Posterior vena cava (tissue), 2 donors: ENCODE measurements at regions of chr9 and their contacts with region 1.

Region 1: DNA sequence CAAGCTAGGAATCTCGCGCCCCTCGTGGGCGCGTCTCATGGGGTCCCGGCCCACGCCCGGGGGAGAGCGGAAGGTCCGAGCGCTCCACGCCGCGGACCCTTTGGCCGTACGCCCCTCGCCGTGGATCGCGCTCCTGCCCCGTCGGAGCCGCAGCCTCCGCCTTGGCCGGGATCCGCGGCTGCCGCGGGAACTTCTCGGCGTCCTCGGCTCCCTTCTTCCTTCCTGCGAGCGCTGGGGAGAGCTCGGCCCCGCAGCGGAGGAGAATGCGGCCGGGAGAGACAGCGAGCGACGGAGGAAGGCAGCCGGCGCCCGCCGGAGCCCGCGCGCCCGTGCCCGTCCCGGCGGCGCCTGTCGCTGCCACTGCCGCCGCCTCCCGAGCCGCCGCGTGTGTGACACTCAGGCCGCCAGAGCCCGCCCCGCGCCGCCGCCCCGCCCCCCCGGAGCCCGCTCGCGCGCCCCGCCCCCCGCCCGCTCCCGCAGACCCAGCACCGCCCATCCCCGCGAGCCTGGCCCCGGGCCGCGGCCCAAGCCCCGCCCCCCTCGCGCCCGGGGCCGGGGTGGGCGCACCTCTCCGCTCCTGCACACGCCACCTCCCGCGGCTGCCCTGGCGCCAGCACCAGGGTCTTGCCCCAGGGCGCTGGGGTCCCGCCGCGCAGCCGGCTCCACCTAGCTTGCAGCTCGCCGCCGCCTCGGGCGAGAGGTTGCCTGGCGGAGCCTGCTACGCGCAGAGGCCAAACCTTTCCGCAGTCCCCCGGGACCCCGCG is at the start of gene SHB:
- DNase-seq: peak; percentile 94
- total RNA-seq, gene SHB: 18.7 to 23.0 TPM

Region 2: GRCh38 chr9:37913480-37914153 is 155.4 kb before region 1 on chr9:
- intact Hi-C with region 1: loop called in 1 of 2 experiments (anchors 5 kb)
- DNase-seq: peak; percentile 92

Region 3: DNA sequence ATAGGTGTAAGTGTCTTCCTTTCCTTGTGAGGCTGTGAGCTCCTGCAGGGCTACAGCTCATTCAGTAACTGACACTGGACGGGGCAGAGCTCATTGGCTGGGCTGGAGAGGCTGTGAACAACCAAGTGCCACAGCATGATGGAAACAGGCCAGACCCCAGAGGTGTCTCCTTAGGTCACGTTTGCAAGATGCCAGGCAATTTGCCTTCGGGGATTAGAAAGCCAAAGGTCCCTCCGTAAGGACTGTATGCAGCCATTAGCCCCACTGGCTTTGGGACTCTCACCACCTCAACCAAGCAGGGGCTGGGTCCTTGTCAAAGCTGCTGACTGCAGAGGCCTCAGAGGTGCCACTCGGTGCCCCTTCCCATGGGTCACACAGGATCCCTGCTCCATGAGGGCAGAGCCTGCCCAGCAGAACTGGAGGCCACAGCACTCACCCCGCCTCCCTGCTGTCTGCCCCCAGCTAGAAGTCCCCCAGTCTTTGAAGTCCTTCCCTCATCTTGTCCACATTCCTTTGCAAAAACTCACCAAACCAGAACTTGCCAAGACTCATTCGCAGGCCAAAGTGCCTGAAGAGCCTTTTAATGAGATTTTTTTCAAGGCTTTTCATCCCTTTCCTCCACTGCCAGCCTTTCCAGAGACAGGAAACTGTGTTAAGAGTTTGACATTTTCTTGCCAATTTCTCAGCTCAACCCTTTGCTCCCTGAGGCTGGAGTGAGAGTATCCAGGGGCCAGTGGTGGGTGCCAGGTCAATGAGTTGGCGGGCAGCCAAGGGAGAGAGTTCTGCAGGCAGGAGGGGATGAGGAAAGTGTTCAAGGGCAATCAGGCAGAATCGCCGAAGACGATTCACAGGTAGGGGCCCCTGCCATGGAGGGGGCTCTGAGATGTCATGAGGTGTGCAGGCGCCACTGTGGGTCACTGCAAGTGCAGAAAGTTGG is 125.5 kb before region 1 on chr9:
- intact Hi-C with region 1: loop called in 1 of 2 experiments (anchors 10 kb)
- DNase-seq: no peak

Region 4: DNA sequence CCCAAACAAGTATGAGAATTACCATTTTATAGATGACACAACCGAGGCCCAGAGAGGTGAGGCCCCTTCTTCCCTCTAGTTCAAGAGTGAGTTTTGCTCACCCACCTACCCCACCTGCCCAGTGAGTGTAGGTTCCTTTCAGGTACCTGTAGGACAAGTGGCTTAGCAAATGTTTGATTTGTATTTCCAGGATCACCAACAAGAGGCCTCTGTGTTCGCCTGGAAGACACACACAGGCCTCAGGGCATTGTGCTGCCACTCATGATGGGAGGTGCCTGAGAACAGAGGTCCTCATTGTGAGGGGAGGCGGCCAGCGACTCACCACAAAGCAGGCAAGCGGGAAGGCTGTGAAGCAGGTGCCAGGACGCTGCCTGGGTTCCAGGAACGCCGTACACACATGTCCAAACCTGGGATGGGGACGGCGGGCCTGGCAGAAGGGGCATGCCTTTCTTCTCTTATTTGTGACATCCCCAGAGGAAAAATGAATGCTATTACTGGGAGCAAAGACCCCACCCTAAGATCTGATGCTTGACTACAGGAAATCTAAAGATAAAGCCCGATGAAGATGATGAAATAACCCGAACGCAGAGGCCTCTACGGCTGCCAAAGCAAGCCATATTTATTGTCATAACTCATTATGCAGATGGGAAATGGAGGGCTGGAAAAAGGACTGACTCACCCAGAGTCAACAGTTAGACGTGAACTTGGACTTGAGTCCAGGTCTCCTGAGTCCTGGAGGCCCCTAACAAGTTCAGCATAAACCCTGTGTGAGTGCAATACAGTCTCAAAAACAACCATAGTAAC is 104.9 kb before region 1 on chr9:
- intact Hi-C with region 1: loop called in 1 of 2 experiments (anchors 10 kb)
- DNase-seq: peak; percentile 89

Region 5: DNA sequence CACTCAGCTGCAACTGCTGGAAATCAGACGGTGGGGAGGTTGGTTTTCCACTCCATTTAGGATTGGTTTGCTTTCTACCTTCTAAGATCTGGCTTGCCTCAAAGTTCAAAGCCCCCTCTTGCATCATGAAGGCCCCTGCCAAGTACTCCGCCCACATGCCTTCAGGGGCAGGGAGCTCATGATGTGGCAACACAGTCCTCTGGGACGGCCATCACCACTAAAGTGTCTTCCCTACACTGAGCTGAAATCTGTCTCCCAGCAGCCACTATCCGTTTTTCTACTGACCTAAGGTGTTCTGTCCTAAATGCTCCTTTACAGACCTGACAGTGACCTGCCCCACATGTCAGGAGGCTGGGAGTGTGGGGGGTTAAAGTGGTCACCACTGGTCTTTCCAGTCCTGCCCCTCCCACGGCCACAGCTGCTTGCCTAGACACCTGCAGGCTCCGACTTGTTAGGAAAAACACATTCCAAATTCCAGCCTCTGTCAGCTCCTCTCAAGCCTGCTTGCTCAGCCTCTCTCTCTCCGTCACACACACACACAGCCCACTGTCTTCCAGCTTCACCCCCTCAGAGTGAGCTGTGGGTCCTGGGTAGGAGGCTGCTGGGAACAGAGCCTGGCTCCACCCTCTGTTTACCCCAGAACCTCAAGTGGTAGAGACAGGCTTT is 44.9 kb before region 1 on chr9:
- intact Hi-C with region 1: loop called in 1 of 2 experiments (anchors 5 kb)
- DNase-seq: peak; percentile 92